Activated B cell treated with CpG ODN at 0.5 μM for 24 hours (primary cell): ENCODE measurements at regions of chr22 and their contacts with region 1.

Region 1: DNA sequence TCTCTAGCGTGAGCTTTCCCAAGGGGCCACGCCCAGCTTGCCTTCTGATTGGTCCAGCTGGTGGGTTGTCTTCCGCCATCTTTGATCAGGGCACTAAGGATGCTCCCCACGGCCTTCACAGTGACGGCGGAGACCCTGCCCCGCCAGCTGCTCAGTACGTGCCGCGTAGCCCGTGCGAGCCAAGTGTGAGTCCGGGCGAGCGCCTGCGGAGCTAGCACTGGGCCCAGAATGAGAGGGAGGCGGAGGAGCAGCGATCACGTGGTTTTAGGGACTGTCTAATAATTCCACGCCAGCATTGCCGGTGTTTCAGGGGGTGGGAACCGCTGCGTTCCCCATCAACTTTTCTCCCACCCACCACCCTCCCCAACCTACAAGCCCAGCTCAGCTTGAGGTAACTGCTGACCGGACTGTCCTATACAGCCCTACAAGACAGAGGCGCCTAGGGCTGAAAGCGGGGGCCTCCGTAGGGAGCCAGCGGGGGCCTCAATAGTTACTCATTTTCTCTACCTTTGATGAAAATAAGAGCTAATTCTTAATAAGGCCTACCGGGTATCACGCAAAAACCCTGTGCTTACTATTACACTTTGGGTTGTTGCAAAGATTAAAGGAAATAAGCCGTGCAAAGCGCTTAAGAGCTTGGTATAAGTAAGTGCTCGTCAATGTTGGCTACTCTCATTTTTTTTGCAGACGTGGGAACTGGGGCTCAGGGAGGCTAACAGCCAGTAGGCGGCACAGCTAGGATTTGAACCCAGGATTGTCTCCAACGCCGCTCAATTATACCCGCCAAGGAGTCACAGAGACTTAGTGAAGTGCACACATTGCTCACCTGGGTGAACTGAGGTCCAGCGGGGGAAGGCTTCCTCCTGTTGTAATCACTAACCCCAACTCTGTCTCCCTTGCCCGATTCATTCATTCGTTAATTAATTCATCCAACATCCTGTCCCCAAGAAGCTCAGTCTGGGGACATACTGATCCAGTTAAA is 1.3 kb upstream of the MTFP1 start:
- DNase-seq: peak; percentile 89
- ATAC-seq: peak; percentile 88
- H3K4me3 Mint-ChIP-seq: peak overlapping the region; percentile 97
- H3K27ac Mint-ChIP-seq: peak overlapping the region; percentile 96
- H3K4me1 Mint-ChIP-seq: peaks cover 47% of the 10 kb centered on the region
- H3K27me3 Mint-ChIP-seq: no peaks in the 10 kb centered on the region
- CTCF ChIP-seq: no peak

Region 2: GRCh38 chr22:29603358-29604075 is 820.8 kb before region 1 on chr22 and contains the start of gene NF2:
- CTCF ChIA-PET with region 1: no interaction called
- POLR2A ChIA-PET with region 1: no interaction called
- intact Hi-C with region 1: loop called (anchors 10 kb)
- DNase-seq: peak; percentile 94
- ATAC-seq: peak; percentile 97
- H3K4me3 Mint-ChIP-seq: peak within 1 kb of the TSS; percentile 93
- H3K27ac Mint-ChIP-seq: peak within 1 kb of the TSS; percentile 95
- H3K4me1 Mint-ChIP-seq: peaks cover 24% of the 10 kb centered on the region
- H3K27me3 Mint-ChIP-seq: no peaks in the 10 kb centered on the region
- CTCF ChIP-seq: no peak
- total RNA-seq, gene NF2: 30.3 and 32.3 TPM in 2 replicates

Region 3: GRCh38 chr22:30305519-30305905 is 118.8 kb before region 1 on chr22:
- CTCF ChIA-PET with region 1: no interaction called
- POLR2A ChIA-PET with region 1: interaction called, 10 read pairs
- intact Hi-C with region 1: no loop called
- DNase-seq: no peak
- ATAC-seq: peak; percentile 61
- H3K4me3 Mint-ChIP-seq: peak overlapping the region; percentile 21
- H3K27ac Mint-ChIP-seq: peak overlapping the region; percentile 81
- H3K4me1 Mint-ChIP-seq: peaks cover 100% of the 10 kb centered on the region
- H3K27me3 Mint-ChIP-seq: no peaks in the 10 kb centered on the region
- CTCF ChIP-seq: no peak

Region 4: DNA sequence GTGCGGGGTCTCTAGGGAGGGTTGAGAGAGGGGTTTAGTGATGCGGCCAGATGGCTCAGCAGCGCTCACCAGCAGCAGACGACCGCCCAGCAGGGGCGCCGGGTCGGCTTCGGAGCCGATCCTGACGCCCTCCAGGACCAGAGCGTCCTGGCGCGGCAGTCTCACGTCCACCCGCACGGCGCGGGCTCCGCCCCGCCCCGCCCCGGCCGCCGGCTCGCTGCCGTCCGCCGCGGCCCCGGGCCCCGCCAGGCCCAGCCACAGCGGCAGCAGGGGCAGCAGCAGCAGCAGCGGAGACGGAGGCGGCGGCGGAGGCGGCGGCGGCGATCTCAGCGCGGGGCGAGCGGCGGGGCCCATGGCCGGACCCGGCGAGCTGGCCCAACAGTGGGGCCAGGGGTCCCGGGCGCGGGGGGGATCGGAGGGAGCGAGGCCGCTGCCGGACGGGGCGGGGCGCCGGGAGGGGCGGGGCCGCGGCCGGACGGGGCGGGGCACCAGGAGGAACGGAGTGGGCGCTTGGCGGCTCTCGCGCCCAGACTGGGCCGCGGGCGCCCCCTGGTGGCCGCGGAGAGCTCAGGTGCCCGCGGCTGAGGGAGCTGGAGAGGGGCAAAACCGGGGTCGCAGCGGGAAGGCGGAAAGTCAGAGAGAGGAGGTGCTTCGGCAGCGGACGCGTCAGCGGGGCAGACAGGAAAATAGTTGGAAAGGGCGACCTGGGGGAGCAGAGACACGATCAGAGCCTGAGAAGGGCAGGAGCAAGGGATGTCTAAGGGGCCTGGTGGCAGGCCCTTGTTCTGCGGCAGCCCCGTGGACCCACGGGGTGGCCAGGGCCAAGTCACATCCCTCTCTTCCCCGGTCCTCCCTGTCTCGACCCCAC is 37.1 kb before region 1 on chr22 and contains the start of gene RNF215:
- CTCF ChIA-PET with region 1: interaction called, 35 read pairs
- POLR2A ChIA-PET with region 1: interaction called, 42 read pairs
- intact Hi-C with region 1: loop called (anchors 1 kb)
- DNase-seq: peak; percentile 94
- ATAC-seq: peak; percentile 85
- H3K4me3 Mint-ChIP-seq: peak within 1 kb of the TSS; percentile 84
- H3K27ac Mint-ChIP-seq: peak within 1 kb of the TSS; percentile 41
- H3K4me1 Mint-ChIP-seq: peaks cover 25% of the 10 kb centered on the region
- H3K27me3 Mint-ChIP-seq: peaks cover 3% of the 10 kb centered on the region
- CTCF ChIP-seq: no peak
- total RNA-seq, gene RNF215: 8.6 and 8.8 TPM in 2 replicates

Region 5: GRCh38 chr22:30591588-30592359 is 167.5 kb after region 1 on chr22 and contains the start of gene PES1:
- CTCF ChIA-PET with region 1: no interaction called
- POLR2A ChIA-PET with region 1: interaction called, 5 read pairs
- intact Hi-C with region 1: loop called (anchors 1 kb)
- DNase-seq: peak; percentile 87
- ATAC-seq: peak; percentile 95
- H3K4me3 Mint-ChIP-seq: no peak within 1 kb of the TSS
- H3K27ac Mint-ChIP-seq: no peak within 1 kb of the TSS
- H3K4me1 Mint-ChIP-seq: no peaks in the 10 kb centered on the region
- H3K27me3 Mint-ChIP-seq: peaks cover 1% of the 10 kb centered on the region
- CTCF ChIP-seq: no peak
- total RNA-seq, gene PES1: 124 TPM in 2 replicates